Right ventricle myocardium inferior (tissue), 1 donor: ENCODE measurements at regions of chr14 and their contacts with region 1.

Region 1: GRCh38 chr14:73458151-73458976 is at the start of gene NUMB:
- DNase-seq: peak; percentile 96
- ATAC-seq: peak; percentile 99
- total RNA-seq, gene NUMB: 39.8 TPM

Region 2: DNA sequence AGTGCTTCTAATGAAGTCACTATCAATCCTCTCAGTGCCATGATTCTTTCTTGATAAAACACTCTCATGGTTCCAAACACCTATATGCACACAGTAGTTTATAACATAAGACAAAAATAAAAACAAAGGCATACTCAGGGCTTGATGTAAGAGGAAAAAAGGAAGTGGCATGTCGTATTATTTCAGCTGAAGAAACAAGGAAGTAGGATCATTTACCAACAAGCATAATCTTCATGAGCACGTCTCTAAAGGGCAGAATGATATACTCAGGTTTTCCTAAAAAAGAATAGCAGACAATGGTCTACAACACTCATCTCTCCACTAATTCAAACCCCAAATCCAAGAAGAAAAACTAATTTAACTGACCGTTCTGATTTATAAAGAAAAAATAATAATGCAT is 33.9 kb before region 1 on chr14:
- intact Hi-C with region 1: loop called (anchors 5 kb)
- DNase-seq: no peak
- ATAC-seq: no peak

Region 3: GRCh38 chr14:73438993-73439392 is 19.4 kb before region 1 on chr14:
- intact Hi-C with region 1: no loop called
- DNase-seq: no peak
- ATAC-seq: no peak